PC-9 (cell line): ENCODE measurements at regions of chr20 and their contacts with region 1.

Region 1: GRCh38 chr20:47620808-47621805 is 119.4 kb downstream of the NCOA3 start:
- DNase-seq: peak; percentile 26 to 61
- H3K4me3 ChIP-seq: no peak overlapping the region
- H3K27ac ChIP-seq: peak overlapping the region; percentile 54
- H3K4me1 ChIP-seq: peaks cover 16% of the 10 kb centered on the region
- H3K27me3 ChIP-seq: no peaks in the 10 kb centered on the region
- CTCF ChIP-seq: peak; percentile 96

Region 2: DNA sequence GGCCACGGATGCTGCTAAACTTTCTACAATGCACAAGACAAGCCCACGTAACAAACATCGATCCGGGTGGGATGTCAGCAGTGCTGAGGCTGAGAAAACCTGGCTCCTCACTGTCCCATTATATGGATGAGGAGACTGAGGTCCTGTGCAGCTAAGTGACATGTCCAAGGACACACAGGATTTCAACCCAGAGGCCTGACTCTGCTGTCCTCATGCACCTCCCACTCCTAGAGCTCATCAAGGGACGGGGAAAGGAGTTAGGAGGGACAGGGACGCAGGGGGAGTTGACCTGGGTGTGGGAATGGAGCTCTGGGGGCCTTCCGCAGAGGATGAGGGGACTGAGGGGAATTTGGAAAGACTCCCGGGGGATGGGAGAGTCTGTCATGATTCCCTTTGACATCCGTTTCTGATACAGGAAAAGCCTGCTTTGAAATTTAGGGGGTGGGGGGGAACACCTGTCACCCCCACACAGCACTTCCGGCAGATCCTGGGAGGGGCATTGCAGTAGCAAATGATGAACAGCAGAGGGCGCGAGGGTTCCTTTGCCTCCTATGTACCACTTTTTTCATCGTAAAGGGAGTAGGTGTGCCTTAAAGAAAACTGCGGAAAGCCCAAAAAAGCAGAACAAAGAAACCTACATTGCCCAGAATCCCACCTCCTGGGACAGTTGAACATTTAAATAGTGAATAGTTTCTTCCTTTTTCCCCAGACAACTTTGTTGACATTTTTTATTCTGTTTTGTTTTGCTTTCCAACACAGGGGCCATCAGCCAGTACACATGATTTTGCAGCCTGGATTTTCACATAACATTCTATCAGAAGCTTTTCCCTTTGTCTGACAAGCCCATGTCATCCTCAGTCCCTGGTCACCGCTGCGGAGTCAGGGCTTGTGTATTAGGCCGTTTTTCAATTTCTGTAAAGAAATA is 863.1 kb before region 1 on chr20:
- CTCF ChIA-PET with region 1: no interaction called
- POLR2A ChIA-PET with region 1: no interaction called
- intact Hi-C with region 1: loop called (anchors 10 kb)
- DNase-seq: peak; percentile 55 to 63
- H3K4me3 ChIP-seq: no peak overlapping the region
- H3K27ac ChIP-seq: no peak overlapping the region
- H3K4me1 ChIP-seq: no peaks in the 10 kb centered on the region
- H3K27me3 ChIP-seq: no peaks in the 10 kb centered on the region
- CTCF ChIP-seq: peak; percentile 100

Region 3: GRCh38 chr20:47205577-47206498 is 415.3 kb before region 1 on chr20:
- CTCF ChIA-PET with region 1: no interaction called
- POLR2A ChIA-PET with region 1: no interaction called
- intact Hi-C with region 1: loop called (anchors 2 kb)
- DNase-seq: peak; percentile 67 to 93
- H3K4me3 ChIP-seq: no peak overlapping the region
- H3K27ac ChIP-seq: peak overlapping the region; percentile 80
- H3K4me1 ChIP-seq: peaks cover 43% of the 10 kb centered on the region
- H3K27me3 ChIP-seq: no peaks in the 10 kb centered on the region
- CTCF ChIP-seq: peak; percentile 76

Region 4: GRCh38 chr20:47392015-47392720 is 228.9 kb before region 1 on chr20:
- CTCF ChIA-PET with region 1: interaction called, 3 read pairs
- POLR2A ChIA-PET with region 1: interaction called, 6 read pairs
- intact Hi-C with region 1: loop called (anchors 1 kb)
- DNase-seq: peak; percentile 80 to 100
- H3K4me3 ChIP-seq: peak overlapping the region; percentile 33; the same call in 1 of the 2 replicates
- H3K27ac ChIP-seq: peak overlapping the region; percentile 99
- H3K4me1 ChIP-seq: peaks cover 64% of the 10 kb centered on the region
- H3K27me3 ChIP-seq: no peaks in the 10 kb centered on the region
- CTCF ChIP-seq: no peak

Region 5: GRCh38 chr20:47445291-47445690 is 175.8 kb before region 1 on chr20:
- CTCF ChIA-PET with region 1: no interaction called
- POLR2A ChIA-PET with region 1: no interaction called
- intact Hi-C with region 1: no loop called
- DNase-seq: no peak
- H3K4me3 ChIP-seq: no peak overlapping the region
- H3K27ac ChIP-seq: no peak overlapping the region
- H3K4me1 ChIP-seq: peaks cover 13% of the 10 kb centered on the region
- H3K27me3 ChIP-seq: no peaks in the 10 kb centered on the region
- CTCF ChIP-seq: no peak

Region 6: DNA sequence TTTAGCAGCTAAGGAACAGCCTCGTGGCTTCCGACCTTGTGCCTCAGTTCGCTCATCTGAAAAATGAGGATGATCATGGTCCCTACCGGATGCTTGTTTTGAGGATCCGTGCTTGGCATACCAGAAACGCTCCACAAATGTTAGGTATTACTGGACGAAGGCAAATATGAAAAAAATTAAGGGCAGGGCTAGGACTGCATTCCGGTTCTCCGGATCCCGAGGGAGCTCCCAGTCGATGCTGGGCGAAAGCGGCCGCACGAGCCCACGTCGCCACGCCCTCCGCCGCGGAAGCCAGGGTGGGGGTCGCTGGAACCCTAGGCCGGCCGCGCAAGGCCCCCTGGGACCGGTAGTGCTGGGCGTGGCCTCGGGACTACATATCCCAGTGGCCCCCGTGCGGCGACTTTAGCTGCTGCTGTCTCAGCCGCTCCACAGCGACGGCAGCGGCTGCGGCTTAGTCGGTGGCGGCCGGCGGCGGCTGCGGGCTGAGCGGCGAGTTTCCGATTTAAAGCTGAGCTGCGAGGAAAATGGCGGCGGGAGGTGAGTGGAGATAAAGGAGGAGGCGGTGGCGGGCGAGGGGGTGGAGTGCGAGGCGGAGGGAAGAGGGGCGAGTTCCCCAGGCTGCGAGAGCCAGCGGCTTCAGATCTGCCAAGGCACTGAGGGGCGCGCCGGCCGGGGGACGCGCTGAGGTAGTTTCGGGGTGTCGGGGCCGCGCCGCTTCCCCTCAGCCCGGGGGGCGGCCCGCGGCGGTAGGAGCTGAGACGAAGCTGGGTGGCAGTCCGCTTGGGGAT is 119.4 kb before region 1 on chr20 and contains the start of gene NCOA3:
- CTCF ChIA-PET with region 1: interaction called, 6 read pairs
- POLR2A ChIA-PET with region 1: interaction called, 6 read pairs
- intact Hi-C with region 1: loop called (anchors 1 kb)
- DNase-seq: peak; percentile 90 to 98
- H3K4me3 ChIP-seq: peak within 1 kb of the TSS; percentile 77
- H3K27ac ChIP-seq: peak within 1 kb of the TSS; percentile 90
- H3K4me1 ChIP-seq: peaks cover 56% of the 10 kb centered on the region
- H3K27me3 ChIP-seq: no peaks in the 10 kb centered on the region
- CTCF ChIP-seq: peak; percentile 68
- total RNA-seq, gene NCOA3: 40.3 and 78.0 TPM in 2 replicates

Region 7: GRCh38 chr20:47561180-47561579 is 59.9 kb before region 1 on chr20:
- CTCF ChIA-PET with region 1: no interaction called
- POLR2A ChIA-PET with region 1: no interaction called
- intact Hi-C with region 1: no loop called
- DNase-seq: no peak
- H3K4me3 ChIP-seq: no peak overlapping the region
- H3K27ac ChIP-seq: no peak overlapping the region
- H3K4me1 ChIP-seq: peaks cover 37% of the 10 kb centered on the region
- H3K27me3 ChIP-seq: no peaks in the 10 kb centered on the region
- CTCF ChIP-seq: no peak

Region 8: GRCh38 chr20:47610247-47610944 is 10.7 kb before region 1 on chr20:
- CTCF ChIA-PET with region 1: interaction called, 4 read pairs
- POLR2A ChIA-PET with region 1: interaction called, 19 read pairs
- intact Hi-C with region 1: no loop called
- DNase-seq: peak; percentile 35 to 69
- H3K4me3 ChIP-seq: no peak overlapping the region
- H3K27ac ChIP-seq: peak overlapping the region; percentile 73
- H3K4me1 ChIP-seq: peaks cover 50% of the 10 kb centered on the region
- H3K27me3 ChIP-seq: no peaks in the 10 kb centered on the region
- CTCF ChIP-seq: no peak

Region 9: DNA sequence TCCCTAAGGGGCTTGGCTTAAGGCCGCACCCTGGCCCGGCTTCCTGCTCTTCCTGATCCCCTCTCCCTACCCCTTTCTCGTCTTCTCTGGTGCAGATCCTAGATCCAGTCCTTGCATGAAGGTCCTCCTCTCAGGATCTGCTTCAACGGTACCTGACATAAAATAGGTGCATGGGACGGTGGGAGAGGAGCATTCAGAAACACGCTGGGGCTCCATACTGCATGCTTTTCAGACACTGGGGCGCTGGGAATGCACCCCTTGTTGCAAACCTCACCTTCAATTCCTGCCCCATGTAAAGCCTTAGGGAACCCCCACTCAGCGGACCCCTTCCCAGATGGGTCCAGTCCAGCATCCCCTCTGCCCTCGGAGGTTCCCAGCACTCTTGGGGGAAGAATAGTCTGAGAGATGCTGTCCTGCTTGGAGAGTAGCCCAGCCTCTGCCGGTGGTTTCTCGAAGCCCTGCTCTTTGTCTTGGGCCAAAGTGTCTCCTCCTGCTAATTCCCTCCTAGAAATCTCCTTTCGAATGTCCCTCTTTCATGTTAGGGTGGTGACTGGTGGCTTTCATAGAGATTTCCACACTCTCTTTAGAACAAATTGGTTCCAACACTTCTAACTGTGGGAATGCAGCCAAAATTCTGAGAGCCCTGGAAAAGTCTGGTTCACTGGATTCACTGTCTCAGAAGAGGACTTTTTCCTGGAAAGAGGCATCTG is 189.0 kb after region 1 on chr20:
- CTCF ChIA-PET with region 1: no interaction called
- POLR2A ChIA-PET with region 1: no interaction called
- intact Hi-C with region 1: no loop called
- DNase-seq: peak in 1 of 2 experiments; percentile 50
- H3K4me3 ChIP-seq: peak overlapping the region; percentile 31; the same call in 1 of the 2 replicates
- H3K27ac ChIP-seq: peak overlapping the region; percentile 95
- H3K4me1 ChIP-seq: peaks cover 72% of the 10 kb centered on the region
- H3K27me3 ChIP-seq: no peaks in the 10 kb centered on the region
- CTCF ChIP-seq: no peak